Motor neuron (in vitro differentiated cells): ENCODE measurements at regions of chr6 and their contacts with region 1.

Region 1: DNA sequence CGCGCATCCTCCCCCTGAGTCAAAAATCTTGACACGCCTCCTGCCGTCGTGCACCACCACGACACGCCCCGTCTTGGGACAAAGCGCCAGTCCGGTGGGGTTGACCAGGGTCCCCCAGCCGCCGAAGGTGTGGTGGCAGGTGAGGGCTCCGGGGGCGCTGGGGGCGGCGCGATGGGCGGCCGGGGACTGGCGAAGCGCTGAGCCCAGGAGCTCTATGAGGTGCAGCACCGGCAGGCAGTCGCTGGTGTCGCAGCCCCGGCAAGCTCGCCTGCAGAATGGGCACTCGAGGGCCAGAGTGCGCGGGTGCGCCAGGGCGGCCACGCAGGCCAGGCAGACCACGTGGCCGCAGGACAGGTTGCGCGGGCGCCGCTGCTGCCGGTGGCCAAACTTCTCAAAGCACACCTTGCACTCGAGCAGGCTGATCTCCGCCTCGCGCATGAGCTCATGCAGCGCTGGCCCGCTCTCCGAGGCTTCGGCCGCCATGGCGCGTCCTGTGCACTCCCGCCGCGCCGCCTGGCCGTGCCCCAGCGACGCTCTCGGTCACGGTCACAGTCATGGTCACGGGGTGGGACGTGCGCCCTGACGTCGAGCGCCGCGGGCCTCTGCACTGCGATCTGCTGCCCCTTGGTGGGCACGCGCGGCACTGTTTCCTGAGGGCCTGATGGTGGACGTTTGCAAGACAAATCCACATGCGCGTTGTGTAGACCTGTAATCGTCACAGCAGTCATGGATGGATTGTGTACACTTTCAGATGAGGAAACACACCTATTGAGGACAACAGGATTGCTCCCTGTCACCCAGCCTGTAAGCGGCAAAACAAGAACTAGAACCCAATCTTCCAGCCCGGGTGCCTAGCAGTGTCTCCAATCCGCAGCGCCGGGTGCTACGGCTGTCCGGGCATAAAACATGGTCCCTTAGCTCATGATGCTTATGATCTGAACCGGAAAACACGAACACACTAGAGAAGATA is at the start of gene NHLRC1:
- ATAC-seq: peak; percentile 88 to 99 (median 98)
- H3K4me3 ChIP-seq: peak within 1 kb of the TSS; percentile 21 to 38 (median 33)
- H3K27ac ChIP-seq: no peak within 1 kb of the TSS
- H3K4me1 ChIP-seq: peaks cover 0 to 2% of the 10 kb centered on the region in 2 donors
- total RNA-seq, gene NHLRC1: 0.25 to 2.4 (median 1.6) TPM

Region 2: DNA sequence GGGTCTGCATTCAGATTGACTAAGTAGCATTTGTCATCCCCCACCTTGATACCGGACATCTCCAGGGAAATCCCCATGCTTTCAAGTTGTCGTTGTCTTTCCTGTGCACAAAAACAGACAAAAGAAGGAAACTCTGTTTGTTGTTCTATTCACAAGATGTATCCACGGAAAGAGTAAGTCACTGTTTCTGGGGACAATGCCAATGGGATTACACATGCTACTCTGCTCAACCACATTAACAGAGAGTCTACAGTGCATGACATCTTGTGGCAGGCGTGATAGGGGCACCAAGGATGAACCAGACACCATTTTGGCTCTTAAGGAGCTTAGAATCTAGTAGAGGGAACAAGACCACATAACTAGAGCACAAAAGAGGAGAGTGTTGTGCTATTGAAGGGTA is 291.3 kb before region 1 on chr6:
- in situ Hi-C with region 1: loop called in 3 of 9 experiments (anchors 25 kb)
- ATAC-seq: peak in 1 of 8 experiments; percentile 43
- H3K4me3 ChIP-seq: no peak overlapping the region
- H3K27ac ChIP-seq: no peak overlapping the region
- H3K4me1 ChIP-seq: no peaks in the 10 kb centered on the region

Region 3: GRCh38 chr6:17987576-17988421 is 134.6 kb before region 1 on chr6 and contains the start of gene KIF13A:
- in situ Hi-C with region 1: loop called in 1 of 9 experiments (anchors 25 kb)
- ATAC-seq: peak; percentile 67 to 82 (median 76)
- H3K4me3 ChIP-seq: peak within 1 kb of the TSS; percentile 52 to 94 (median 86)
- H3K27ac ChIP-seq: peak within 1 kb of the TSS; percentile 90 to 92
- H3K4me1 ChIP-seq: peaks cover 23 to 25% of the 10 kb centered on the region in 2 donors
- total RNA-seq, gene KIF13A: 15.5 to 50.5 (median 24.5) TPM

Region 4: DNA sequence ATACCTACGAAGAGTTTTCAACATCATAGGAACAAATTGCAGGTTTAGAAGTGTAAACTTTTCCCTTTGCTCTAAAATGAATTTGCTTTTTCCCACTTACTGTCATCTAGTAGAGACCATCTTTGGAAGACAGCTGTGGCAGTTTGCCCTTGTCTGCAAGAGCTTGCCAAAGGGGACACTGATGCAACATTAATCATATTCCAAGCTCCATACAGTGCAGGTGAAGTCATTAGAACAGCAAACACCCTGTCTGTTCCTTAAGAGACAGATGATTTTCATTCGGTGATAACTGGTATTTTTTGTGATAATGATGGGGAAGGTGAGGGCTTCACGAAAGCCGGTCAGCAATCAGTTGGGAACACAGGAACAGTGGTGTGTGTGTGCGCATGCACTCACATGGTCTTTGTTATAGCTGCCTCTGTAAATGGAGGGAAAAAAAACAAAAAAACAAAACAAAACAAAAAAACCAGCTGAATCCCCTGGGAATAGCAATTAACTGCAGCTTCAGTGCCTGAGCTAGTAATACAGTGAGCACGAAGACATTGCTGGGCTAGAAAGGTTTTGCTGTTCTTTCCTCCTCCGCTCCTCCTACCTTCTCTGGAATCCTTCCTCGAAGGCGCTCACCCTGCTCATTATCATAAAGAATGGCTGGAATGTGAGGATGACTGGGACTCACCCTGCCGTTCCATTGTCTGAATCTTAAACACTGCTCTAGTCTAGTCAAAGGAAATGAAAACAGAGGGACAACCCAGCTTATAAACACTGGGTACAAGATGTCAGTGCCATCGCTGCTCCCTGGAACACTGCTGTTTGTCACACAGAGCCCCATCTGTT is 99.8 kb before region 1 on chr6:
- in situ Hi-C with region 1: loop called in 1 of 9 experiments (anchors 25 kb)
- ATAC-seq: peak; percentile 85 to 99 (median 88)
- H3K4me3 ChIP-seq: peak overlapping the region in 2 of 5 donors; percentile 1 to 4
- H3K27ac ChIP-seq: peak overlapping the region; percentile 40 to 76
- H3K4me1 ChIP-seq: peaks cover 15 to 21% of the 10 kb centered on the region in 2 donors